Activated CD4-positive, alpha-beta memory T cell treated with anti-CD3 and anti-CD28 coated beads for 36 hours (primary cell): ENCODE measurements at regions of chr7 and their contacts with region 1.

Region 1: GRCh38 chr7:106153891-106154449 is 41.9 kb upstream of the SYPL1 start:
- DNase-seq: peak; percentile 82
- H3K4me3 Mint-ChIP-seq: no peak overlapping the region
- H3K27ac Mint-ChIP-seq: no peak overlapping the region
- H3K4me1 Mint-ChIP-seq: peaks cover 3% of the 10 kb centered on the region
- H3K27me3 Mint-ChIP-seq: peaks cover 20% of the 10 kb centered on the region

Region 2: DNA sequence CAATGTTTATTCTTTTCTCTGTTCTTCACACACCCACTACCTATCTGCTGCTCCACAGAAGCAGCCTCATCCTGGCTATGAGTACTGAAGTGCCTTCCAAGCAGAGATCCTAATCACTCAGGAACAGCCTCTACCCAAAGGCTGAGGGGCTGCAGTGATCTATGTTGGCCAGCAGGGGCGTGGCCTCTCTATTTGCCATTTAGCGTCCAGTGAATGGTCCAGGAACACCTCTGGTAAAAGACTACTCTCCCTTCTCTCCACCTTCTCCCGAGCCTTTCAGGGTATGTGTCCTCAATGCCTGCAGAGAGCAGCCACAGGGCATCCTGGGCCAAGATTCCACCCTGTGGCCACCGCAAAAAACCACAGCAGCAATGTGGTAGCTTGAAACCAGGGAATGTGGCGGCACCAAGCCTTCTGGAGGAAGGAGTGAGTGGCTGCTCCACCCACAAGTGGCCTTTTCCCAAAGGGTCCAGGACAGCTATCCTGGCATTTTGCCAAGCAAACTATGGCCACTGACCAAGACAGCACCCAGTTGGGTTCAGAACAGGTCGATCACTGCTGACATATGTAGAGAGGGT is 112.7 kb before region 1 on chr7:
- CTCF ChIA-PET with region 1: interaction called, 15 read pairs
- POLR2A ChIA-PET with region 1: no interaction called
- intact Hi-C with region 1: no loop called
- DNase-seq: peak; percentile 52
- H3K4me3 Mint-ChIP-seq: no peak overlapping the region
- H3K27ac Mint-ChIP-seq: no peak overlapping the region
- H3K4me1 Mint-ChIP-seq: peaks cover 23% of the 10 kb centered on the region
- H3K27me3 Mint-ChIP-seq: peaks cover 2% of the 10 kb centered on the region

Region 3: GRCh38 chr7:106056513-106057203 is 97.3 kb before region 1 on chr7:
- CTCF ChIA-PET with region 1: interaction called, 177 read pairs
- POLR2A ChIA-PET with region 1: interaction called, 3 read pairs
- intact Hi-C with region 1: loop called (anchors 1 kb)
- DNase-seq: peak; percentile 80
- H3K4me3 Mint-ChIP-seq: no peak overlapping the region
- H3K27ac Mint-ChIP-seq: no peak overlapping the region
- H3K4me1 Mint-ChIP-seq: peaks cover 13% of the 10 kb centered on the region
- H3K27me3 Mint-ChIP-seq: no peaks in the 10 kb centered on the region

Region 4: DNA sequence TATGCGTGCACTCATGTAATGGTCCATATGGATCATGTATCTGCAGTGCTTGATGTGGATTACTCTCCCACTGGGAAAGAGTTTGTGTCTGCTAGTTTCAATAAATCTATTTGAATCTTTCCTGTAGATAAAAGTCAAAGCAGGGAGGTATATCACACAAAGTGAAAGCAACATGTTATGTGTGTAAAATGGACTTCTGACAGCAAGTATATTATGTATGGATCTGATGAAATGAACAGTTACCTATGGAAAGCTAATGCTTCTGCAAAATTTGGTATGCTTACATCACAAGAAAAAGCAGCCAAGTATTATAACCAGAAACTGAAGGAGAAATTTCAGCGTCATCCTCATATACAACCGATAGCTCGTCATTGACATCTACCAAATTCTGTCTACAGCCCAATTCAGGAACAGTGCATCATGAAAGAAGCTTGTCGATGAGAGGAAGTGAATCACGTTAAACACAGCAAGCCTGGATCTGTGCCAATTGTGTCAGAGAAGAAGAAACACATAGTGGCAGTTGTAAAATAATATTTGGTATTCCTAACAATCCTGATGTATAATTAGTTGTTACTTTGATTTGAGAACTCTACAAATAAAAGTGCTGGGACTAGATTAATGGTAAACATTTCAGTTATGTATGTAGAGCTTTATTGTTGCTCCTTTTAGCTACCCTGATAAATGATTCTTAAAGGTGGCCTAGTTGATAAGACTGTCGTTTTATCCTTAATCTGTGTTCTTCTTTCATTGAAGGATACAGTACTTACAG is 27.6 kb before region 1 on chr7:
- CTCF ChIA-PET with region 1: interaction called, 10 read pairs
- POLR2A ChIA-PET with region 1: no interaction called
- intact Hi-C with region 1: no loop called
- DNase-seq: peak; percentile 56
- H3K4me3 Mint-ChIP-seq: peak overlapping the region; percentile 56
- H3K27ac Mint-ChIP-seq: peak overlapping the region; percentile 14
- H3K4me1 Mint-ChIP-seq: peaks cover 14% of the 10 kb centered on the region
- H3K27me3 Mint-ChIP-seq: peaks cover 3% of the 10 kb centered on the region

Region 5: DNA sequence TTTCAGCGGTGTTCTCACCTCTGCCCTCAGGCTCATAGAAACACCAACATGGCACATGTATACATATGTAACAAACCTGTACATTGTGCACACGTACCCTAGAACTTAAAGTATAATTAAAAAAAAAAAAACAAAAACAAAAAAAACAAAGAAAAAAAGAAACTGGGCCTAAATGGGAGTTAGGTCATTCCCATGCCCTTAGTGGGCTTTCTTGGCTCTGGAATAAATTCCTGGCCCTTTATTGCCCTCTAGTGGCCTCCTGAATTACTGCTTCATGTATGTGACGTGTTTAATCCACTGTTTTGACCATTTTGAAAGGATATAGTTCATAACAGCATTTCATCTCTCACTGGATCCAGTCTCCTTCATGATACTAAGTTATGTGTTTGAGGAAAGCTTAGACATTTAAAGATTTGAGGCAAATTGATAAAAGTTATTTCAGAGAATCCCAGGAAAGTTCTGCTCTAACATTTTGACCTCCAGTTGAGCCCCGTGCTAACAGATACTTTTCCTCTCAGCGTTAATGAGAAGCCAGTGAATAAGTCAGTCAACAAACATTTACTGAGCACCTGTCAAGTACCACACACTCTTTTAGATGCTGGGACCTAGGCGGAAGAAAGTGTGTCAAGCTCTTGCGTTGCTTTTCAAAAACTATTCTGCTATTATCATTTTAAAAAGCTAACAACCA is 12.8 kb after region 1 on chr7:
- CTCF ChIA-PET with region 1: interaction called, 38 read pairs
- POLR2A ChIA-PET with region 1: interaction called, 4 read pairs
- intact Hi-C with region 1: no loop called
- DNase-seq: peak; percentile 21
- H3K4me3 Mint-ChIP-seq: no peak overlapping the region
- H3K27ac Mint-ChIP-seq: peak overlapping the region; percentile 24
- H3K4me1 Mint-ChIP-seq: peaks cover 3% of the 10 kb centered on the region
- H3K27me3 Mint-ChIP-seq: peaks cover 10% of the 10 kb centered on the region

Region 6: DNA sequence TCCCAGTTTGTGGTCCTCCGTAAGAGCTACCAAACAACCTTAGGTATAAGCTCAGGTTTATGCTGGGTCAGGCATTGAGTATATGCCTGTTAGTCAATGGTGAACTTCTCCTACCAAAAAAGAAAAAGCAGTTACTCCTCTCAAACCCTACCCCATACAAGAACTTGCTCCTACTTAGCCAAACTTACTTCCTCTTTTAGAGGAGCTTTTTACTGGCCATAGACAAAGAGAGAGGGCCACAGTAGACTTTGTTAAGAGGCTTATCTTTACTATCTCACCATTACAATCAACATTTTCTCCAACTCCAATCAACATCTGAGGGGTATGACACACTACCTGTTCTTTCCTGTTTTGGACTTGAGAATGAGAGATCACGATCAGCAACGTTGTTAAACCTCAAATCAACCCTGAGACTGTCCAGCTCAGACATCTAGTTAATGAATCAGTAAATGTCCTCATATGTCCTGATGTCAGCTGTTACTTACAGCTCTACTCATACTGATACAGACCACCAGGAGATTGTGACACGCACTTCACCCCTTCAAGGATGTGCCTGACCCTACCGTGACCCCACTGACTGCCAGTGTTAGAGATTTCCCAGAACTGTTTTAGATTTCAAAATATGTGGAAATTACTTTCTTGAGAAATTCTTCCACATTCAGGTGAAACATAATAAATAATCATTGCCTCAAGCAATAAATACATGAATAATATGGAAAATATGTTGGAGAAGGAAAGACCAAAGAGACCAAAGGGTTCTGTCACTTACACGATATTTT is 525.4 kb after region 1 on chr7:
- CTCF ChIA-PET with region 1: no interaction called
- POLR2A ChIA-PET with region 1: no interaction called
- intact Hi-C with region 1: no loop called
- DNase-seq: peak; percentile 52
- H3K4me3 Mint-ChIP-seq: no peak overlapping the region
- H3K27ac Mint-ChIP-seq: peak overlapping the region; percentile 72
- H3K4me1 Mint-ChIP-seq: peaks cover 13% of the 10 kb centered on the region
- H3K27me3 Mint-ChIP-seq: no peaks in the 10 kb centered on the region